Right cardiac atrium (tissue), 5 donors: ENCODE measurements at regions of chr19 and their contacts with region 1.

Region 1: DNA sequence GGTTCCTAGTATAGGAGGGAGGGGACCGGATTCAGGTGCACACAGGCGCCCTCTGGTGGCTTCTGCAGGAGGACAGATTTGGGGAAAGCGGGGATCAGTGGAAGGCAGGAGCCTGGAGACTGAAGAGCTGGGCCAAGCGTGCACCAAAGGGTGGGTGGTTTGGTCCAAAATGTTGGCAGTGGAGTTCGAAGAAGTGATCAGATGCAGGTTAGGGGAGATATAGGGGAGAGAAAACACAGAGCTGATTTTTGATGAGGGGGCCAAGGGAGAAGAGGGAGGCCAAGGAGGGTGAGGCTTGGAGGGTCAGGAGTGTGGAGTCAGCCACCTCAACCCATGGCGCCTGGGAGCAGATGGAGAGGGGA is 6.8 kb upstream of the CARM1 start:
- DNase-seq: peak; percentile 82 to 95 (median 94)
- ATAC-seq: peak; percentile 75 to 76
- H3K4me3 ChIP-seq: no peak overlapping the region
- H3K27ac ChIP-seq: no peak overlapping the region
- H3K4me1 ChIP-seq: peaks cover 2% of the 10 kb centered on the region
- H3K27me3 ChIP-seq: no peaks in the 10 kb centered on the region

Region 2: DNA sequence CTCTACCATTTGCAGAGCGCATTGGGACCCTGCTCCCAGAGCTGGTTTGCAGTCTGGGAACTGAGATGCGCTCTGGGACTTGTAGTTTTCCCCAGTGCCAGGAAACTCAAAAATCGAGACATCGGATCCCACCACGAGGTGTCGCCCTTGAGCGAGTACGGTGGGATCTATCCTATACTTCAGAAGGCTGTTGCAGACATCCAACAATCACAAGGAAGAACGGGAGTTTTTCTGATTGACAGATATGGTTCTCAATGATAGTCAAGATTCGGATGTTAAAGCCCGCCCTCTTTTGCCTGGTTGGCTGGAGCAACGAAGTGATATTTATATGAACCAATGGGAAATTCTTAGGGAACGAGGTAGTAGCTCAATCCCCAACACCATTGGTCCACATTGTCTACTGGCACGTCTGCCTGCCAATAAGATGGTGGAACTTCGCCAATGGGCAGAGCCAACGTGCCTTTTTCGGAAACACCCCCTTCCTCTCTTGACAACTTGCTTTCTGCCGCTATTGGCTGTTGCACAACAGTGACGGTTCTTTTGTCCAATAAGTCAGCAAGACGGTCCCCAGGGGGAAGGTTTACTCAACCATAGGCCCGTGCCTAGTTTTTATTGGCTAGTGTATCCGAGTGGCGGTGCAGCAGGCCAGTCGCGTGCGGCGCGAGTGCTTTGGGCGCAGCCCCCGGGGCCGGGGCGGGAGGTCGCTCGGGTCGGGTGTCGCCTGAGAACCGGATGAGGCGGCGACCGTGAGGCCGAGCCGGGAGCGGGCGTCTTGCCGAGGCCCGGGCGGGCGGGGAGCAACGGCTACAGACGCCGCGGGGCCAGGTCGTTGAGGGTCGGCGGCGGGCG is 146.9 kb before region 1 on chr19 and contains the start of gene DNM2:
- intact Hi-C with region 1: loop called (anchors 5 to 10 kb)
- DNase-seq: peak; percentile 98 to 99 (median 99)
- ATAC-seq: peak; percentile 94 to 96
- H3K4me3 ChIP-seq: peak within 1 kb of the TSS; percentile 96
- H3K27ac ChIP-seq: peak within 1 kb of the TSS; percentile 95
- H3K4me1 ChIP-seq: peaks cover 15% of the 10 kb centered on the region
- H3K27me3 ChIP-seq: no peaks in the 10 kb centered on the region
- total RNA-seq, gene DNM2: 176 to 202 (median 189) TPM

Region 3: DNA sequence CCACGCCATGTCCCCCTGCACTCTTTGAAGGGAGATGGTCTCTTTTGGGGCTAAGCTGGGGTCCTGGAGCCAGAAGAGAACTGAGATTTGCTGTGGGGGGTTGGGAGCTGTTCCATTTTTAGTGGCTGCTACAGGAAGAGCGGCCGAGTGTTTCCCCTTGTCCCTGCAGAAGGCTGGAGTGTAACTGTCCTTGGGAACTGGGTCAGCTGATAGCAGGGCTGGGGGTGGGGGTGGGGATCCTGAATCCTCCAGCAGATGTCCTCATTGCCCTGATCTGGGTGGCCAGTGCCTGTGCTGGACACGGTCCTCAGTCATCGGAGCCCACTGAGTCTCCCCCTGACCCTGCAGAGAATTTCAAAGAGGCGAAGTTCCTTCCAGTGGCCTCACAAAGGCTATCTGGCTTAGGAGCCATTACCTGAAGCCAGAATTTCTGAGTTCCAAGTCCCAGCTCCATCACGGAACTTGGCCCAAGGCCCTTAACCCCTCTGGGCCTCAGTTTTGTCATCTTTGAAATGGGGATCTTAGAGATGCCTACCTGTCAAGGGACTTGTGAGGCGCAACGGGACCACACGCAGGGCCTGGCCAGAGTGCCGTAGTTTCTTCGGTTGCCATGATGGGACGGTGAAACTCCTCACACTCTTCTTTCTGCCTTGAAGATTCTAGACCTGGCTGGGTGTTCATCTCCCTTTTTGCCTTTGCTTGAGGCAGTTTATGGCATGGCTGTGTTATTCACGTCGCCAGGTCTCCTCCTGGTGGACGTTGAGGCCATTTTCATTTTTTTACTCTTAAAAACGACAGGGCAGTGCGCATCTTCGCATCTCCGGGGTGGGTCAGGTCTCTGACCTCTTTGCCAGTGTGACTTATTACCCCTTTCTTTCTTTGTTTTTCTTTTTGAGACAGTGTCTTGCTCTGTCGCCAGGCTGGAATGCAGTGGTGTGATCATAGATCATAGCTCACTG is 94.7 kb before region 1 on chr19:
- intact Hi-C with region 1: loop called in 2 of 4 experiments (anchors 5 to 10 kb)
- DNase-seq: peak; percentile 52 to 86 (median 84)
- ATAC-seq: peak; percentile 75 to 82
- H3K4me3 ChIP-seq: no peak overlapping the region
- H3K27ac ChIP-seq: peak overlapping the region; percentile 90
- H3K4me1 ChIP-seq: peaks cover 21% of the 10 kb centered on the region
- H3K27me3 ChIP-seq: no peaks in the 10 kb centered on the region

Region 4: DNA sequence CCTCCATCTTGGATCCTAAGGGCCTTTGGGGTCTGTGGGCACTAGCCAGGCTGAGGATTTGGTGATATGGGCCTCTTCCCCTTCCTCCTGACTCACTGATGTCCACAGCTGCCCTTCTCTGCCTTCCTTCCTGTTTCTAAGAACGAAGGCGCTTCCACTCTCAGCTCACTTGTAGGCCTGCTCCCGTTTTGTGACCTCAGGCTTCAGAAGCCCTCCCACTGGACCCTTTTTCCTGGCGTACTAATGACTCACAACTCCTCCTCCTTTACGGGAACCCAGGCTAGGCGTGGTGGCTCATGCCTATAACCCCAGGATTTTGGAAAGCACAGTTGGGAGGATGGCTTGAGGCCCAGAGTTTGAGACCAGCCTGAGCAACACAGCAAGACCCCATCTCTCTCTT is 84.2 kb before region 1 on chr19:
- intact Hi-C with region 1: loop called in 2 of 4 experiments (anchors 10 kb)
- DNase-seq: peak in 2 of 3 donors; percentile 67 to 80
- ATAC-seq: peak; percentile 83 to 93
- H3K4me3 ChIP-seq: no peak overlapping the region
- H3K27ac ChIP-seq: peak overlapping the region; percentile 43
- H3K4me1 ChIP-seq: peaks cover 3% of the 10 kb centered on the region
- H3K27me3 ChIP-seq: no peaks in the 10 kb centered on the region

Region 5: GRCh38 chr19:11064831-11065303 is 200.3 kb after region 1 on chr19:
- intact Hi-C with region 1: no loop called
- DNase-seq: no peak
- ATAC-seq: peak in 1 of 2 donors; percentile 29
- H3K4me3 ChIP-seq: no peak overlapping the region
- H3K27ac ChIP-seq: no peak overlapping the region
- H3K4me1 ChIP-seq: no peaks in the 10 kb centered on the region
- H3K27me3 ChIP-seq: no peaks in the 10 kb centered on the region